Ovary (tissue), 10 donors: ENCODE measurements at regions of chr7 and their contacts with region 1.

Region 1: GRCh38 chr7:147607151-147607800 is 983.3 kb upstream of the C7orf33 start:
- DNase-seq: no peak
- H3K4me3 ChIP-seq: no peak overlapping the region
- H3K27ac ChIP-seq: no peak overlapping the region
- H3K4me1 ChIP-seq: no peaks in the 10 kb centered on the region
- H3K27me3 ChIP-seq: no peaks in the 10 kb centered on the region
- CTCF ChIP-seq: no peak
- EP300 ChIP-seq: no peak
- POLR2A ChIP-seq: no peak

Region 2: DNA sequence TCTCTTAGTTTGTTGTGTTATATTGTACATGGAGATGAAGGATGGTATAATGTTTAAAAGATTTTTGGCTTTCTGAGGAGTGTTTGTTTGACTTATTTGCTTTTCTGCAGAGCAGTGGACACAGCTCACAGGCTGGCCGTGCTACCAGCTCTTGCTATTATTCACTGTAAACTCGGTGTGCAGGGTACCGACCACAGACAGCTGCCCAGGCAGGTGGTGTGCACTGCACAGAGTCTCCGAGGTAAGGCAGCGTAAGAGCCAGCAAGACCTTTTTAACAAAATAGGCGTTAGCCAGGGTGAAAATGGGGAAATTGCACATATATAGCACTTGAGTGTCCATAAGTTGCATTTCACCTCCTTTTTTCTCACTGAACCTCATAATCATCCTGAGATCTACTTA is 1052.7 kb before region 1 on chr7:
- intact Hi-C with region 1: no loop called
- DNase-seq: no peak
- H3K4me3 ChIP-seq: no peak overlapping the region
- H3K27ac ChIP-seq: no peak overlapping the region
- H3K4me1 ChIP-seq: no peaks in the 10 kb centered on the region
- H3K27me3 ChIP-seq: no peaks in the 10 kb centered on the region
- CTCF ChIP-seq: no peak
- EP300 ChIP-seq: no peak
- POLR2A ChIP-seq: no peak

Region 3: DNA sequence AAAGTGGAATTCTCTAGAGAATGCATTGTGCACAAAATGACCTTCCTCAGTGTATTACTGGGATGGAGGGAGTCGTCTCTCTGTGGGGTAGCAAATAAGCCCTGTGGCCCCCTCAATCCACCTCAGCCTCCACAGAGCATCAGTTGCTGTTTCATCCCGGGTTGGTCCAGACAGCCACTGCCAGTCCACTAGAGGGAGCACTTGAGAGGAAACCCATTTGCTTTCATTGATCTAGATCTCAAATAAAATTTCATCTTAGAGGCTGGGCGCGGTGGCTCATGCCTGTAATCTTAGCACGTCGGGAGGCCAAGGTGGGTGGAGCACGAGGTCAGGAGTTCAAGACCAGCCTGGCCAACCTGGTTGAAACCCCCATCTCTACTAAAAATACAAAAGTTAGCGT is 362.0 kb before region 1 on chr7:
- intact Hi-C with region 1: no loop called
- DNase-seq: no peak
- H3K4me3 ChIP-seq: no peak overlapping the region
- H3K27ac ChIP-seq: no peak overlapping the region
- H3K4me1 ChIP-seq: no peaks in the 10 kb centered on the region
- H3K27me3 ChIP-seq: no peaks in the 10 kb centered on the region
- CTCF ChIP-seq: no peak
- EP300 ChIP-seq: no peak
- POLR2A ChIP-seq: no peak

Region 4: GRCh38 chr7:148419856-148420832 is 812.9 kb after region 1 on chr7:
- intact Hi-C with region 1: loop called in 1 of 4 experiments (anchors 5 kb)
- DNase-seq: no peak
- H3K4me3 ChIP-seq: no peak overlapping the region
- H3K27ac ChIP-seq: no peak overlapping the region
- H3K4me1 ChIP-seq: no peaks in the 10 kb centered on the region
- H3K27me3 ChIP-seq: no peaks in the 10 kb centered on the region
- CTCF ChIP-seq: no peak
- EP300 ChIP-seq: no peak
- POLR2A ChIP-seq: no peak